PC-9 (cell line): ENCODE measurements at regions of chr2 and their contacts with region 1.

Region 1: DNA sequence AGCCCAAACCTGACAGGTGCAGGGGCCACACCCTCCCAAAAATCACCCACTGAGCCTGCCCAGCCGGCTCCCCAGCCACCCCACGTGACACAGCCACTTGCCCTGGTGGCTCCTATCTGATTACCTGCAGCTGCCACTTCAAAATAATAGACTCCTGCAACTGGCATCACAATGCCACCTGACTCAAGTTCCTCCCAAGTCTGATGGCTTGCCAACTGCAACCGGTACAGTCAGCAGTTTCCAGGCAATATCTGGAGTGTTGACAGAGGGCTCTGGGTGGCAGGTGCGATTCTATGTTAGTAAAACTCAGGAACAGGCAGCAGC is 66.1 kb downstream of the CRACDL start:
- DNase-seq: peak; percentile 90 to 97
- H3K4me3 ChIP-seq: peak overlapping the region; percentile 63
- H3K27ac ChIP-seq: peak overlapping the region; percentile 95
- H3K4me1 ChIP-seq: peaks cover 66% of the 10 kb centered on the region
- H3K27me3 ChIP-seq: no peaks in the 10 kb centered on the region
- CTCF ChIP-seq: no peak

Region 2: GRCh38 chr2:98479959-98480524 is 389.9 kb before region 1 on chr2:
- CTCF ChIA-PET with region 1: no interaction called
- POLR2A ChIA-PET with region 1: interaction called, 6 read pairs
- intact Hi-C with region 1: loop called (anchors 1 kb)
- DNase-seq: peak; percentile 93 to 97
- H3K4me3 ChIP-seq: no peak overlapping the region
- H3K27ac ChIP-seq: peak overlapping the region; percentile 93
- H3K4me1 ChIP-seq: peaks cover 69% of the 10 kb centered on the region
- H3K27me3 ChIP-seq: no peaks in the 10 kb centered on the region
- CTCF ChIP-seq: no peak

Region 3: GRCh38 chr2:98664327-98664726 is 205.6 kb before region 1 on chr2:
- CTCF ChIA-PET with region 1: no interaction called
- POLR2A ChIA-PET with region 1: no interaction called
- intact Hi-C with region 1: loop called (anchors 1 kb)
- DNase-seq: peak; percentile 60 to 89
- H3K4me3 ChIP-seq: no peak overlapping the region
- H3K27ac ChIP-seq: peak overlapping the region; percentile 92
- H3K4me1 ChIP-seq: peaks cover 19% of the 10 kb centered on the region
- H3K27me3 ChIP-seq: no peaks in the 10 kb centered on the region
- CTCF ChIP-seq: no peak

Region 4: GRCh38 chr2:98793299-98793698 is 76.6 kb before region 1 on chr2:
- CTCF ChIA-PET with region 1: no interaction called
- POLR2A ChIA-PET with region 1: interaction called, 4 read pairs
- intact Hi-C with region 1: loop called (anchors 1 kb)
- DNase-seq: peak; percentile 35 to 93
- H3K4me3 ChIP-seq: peak overlapping the region; percentile 22; the same call in 1 of the 2 replicates
- H3K27ac ChIP-seq: peak overlapping the region; percentile 75
- H3K4me1 ChIP-seq: peaks cover 28% of the 10 kb centered on the region
- H3K27me3 ChIP-seq: no peaks in the 10 kb centered on the region
- CTCF ChIP-seq: no peak

Region 5: DNA sequence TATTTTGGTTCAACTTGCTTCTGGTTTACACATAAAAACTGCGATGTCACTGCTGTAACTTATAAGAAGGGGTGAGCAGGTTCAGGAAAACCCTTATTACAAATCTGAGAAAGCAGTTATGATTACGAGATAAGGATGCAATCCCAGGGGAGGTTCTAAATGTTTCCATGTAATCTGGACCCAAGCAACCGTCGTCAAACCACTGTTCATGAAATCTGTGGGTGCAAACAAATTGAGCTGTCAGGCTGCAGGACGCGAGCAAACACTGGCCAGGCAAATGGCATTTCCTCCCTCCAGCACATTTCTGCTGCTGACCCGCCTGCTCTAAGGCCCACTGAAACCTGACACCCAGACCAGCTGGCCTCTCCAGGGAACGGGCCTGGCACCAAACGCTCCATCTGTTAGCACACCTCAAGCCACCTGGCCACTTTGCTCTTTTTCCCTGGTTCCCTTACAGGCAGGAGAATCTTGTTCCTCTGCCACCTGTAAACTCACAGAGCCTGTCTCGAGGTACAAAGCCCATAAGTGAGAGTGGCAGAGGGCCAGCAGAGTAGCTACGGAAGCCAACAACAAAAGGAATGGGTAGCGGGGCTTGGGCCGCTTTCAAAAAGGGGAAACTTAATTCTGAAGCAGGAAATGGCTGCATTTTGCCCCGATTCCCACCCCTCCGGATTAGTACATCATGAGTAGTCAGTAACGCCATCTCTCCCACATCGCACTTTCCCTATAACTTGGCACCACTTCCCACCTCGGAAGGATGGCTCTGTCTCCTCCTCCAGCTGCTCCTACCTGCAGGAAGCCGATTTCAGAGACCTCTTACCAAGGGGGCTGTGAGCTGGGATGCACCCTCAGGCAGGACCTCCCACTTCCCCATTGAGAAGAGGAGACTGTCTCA is 39.7 kb after region 1 on chr2:
- CTCF ChIA-PET with region 1: interaction called, 5 read pairs
- POLR2A ChIA-PET with region 1: interaction called, 6 read pairs
- intact Hi-C with region 1: loop called (anchors 1 kb)
- DNase-seq: peak; percentile 91 to 92
- H3K4me3 ChIP-seq: no peak overlapping the region
- H3K27ac ChIP-seq: no peak overlapping the region
- H3K4me1 ChIP-seq: peaks cover 17% of the 10 kb centered on the region
- H3K27me3 ChIP-seq: no peaks in the 10 kb centered on the region
- CTCF ChIP-seq: no peak

Region 6: GRCh38 chr2:98926601-98927000 is 56.7 kb after region 1 on chr2:
- CTCF ChIA-PET with region 1: no interaction called
- POLR2A ChIA-PET with region 1: no interaction called
- intact Hi-C with region 1: no loop called
- DNase-seq: no peak
- H3K4me3 ChIP-seq: no peak overlapping the region
- H3K27ac ChIP-seq: no peak overlapping the region
- H3K4me1 ChIP-seq: no peaks in the 10 kb centered on the region
- H3K27me3 ChIP-seq: no peaks in the 10 kb centered on the region
- CTCF ChIP-seq: no peak

Region 7: DNA sequence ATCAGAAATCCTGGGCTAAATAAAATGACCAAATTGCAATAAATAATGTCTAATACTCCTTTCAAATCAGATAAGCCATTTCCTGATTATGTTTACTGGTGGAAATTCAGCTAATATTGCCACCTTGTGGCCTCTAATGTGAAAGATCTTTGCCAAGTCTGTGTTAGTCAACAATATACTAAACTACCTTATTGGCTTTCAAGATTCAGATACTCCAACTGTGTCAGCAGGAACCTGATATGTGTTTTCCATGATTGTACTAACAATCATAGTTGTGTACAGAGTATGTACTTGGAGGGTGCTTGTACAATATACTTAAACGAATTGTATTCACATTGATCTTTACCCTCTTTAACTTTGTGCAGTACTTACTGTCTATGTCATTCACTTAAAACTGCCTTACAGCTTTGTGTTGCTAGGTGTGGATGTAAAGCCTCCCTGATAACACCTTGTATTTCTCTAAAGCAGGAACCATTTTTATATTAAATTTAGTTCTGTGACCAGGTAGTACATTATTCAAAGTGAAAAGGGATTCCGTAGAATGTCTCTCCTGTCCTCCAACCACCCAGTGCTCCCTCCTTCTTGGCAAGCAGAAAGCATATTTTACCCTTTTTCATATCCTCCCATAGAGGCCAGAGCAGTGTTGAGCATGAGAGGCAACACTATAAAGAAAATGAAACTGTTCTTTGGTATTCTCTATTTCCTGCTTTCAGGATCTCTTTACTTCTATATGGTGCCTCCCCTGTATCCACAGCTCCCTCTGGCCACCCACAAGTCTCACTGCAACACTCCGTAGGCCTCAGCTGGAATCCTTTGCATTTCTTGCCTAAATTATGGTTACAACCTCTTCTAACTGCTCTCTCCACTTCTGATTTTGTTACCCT is 196.4 kb after region 1 on chr2:
- CTCF ChIA-PET with region 1: interaction called, 3 read pairs
- POLR2A ChIA-PET with region 1: no interaction called
- intact Hi-C with region 1: loop called (anchors 1 kb)
- DNase-seq: peak; percentile 34 to 69
- H3K4me3 ChIP-seq: no peak overlapping the region
- H3K27ac ChIP-seq: no peak overlapping the region
- H3K4me1 ChIP-seq: peaks cover 4% of the 10 kb centered on the region; the same call in 1 of the 2 replicates
- H3K27me3 ChIP-seq: no peaks in the 10 kb centered on the region
- CTCF ChIP-seq: peak; percentile 81